ENCODE measurements at regions of chr9 and their contacts with region 1.

Region 1: DNA sequence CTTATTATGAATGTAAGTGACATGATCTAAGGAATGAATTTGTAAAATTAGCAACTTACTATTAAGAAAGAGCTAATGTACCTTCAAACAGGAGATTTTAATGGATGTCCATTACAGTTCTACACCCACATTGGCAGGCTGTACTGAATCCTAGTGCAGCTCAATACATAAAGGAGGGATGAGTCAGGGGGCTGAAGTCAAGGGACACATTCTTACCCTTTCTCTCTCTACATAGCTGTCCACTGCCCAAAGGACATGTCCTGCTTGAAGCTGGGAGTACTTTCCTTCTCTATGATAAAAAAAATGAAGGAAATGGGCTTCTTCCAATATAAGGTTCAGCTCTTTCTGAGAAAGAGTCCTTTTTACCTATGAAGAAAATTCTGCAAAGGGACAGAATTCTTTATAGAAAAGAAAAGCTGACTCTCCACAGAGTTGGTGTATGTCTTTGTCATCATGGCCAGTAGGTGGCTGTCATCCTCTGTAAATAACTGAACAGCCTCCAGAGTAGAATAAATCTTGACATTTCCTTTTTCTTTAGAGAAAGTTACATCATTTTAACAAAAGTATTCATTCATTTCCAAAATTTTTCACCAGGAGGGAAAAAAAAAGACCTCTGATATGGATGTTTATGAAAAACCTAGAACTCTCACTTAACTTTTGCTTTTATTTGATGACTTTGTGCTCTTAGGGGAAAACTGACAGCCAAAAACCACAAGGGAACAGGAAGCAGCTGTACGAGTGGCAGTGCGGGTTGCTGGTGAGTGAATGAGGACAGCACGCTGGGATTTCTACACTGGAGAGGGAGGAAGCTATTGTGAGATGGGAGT is 13.1 kb upstream of the IFNA14 start:
- DNase-seq: peak; percentile 21
- H3K4me3 Mint-ChIP-seq: no peak overlapping the region
- H3K27ac Mint-ChIP-seq: no peak overlapping the region
- H3K4me1 Mint-ChIP-seq: peaks cover 16% of the 10 kb centered on the region
- H3K27me3 Mint-ChIP-seq: peaks cover 11% of the 10 kb centered on the region
- CTCF ChIP-seq: peak; percentile 33

Region 2: GRCh38 chr9:21305213-21305612 is 52.3 kb after region 1 on chr9 and contains the start of gene IFNA5:
- CTCF ChIA-PET with region 1: no interaction called
- intact Hi-C with region 1: loop called (anchors 5 kb)
- DNase-seq: no peak
- H3K4me3 Mint-ChIP-seq: no peak within 1 kb of the TSS
- H3K27ac Mint-ChIP-seq: no peak within 1 kb of the TSS
- H3K4me1 Mint-ChIP-seq: no peaks in the 10 kb centered on the region
- H3K27me3 Mint-ChIP-seq: no peaks in the 10 kb centered on the region
- CTCF ChIP-seq: no peak
- total RNA-seq, gene IFNA5: not detected in 2 replicates

Measured in Calu3 (cell line).